ENCODE measurements at regions of chr10 and their contacts with region 1.

Region 1: GRCh38 chr10:124347956-124348355 is 70.8 kb downstream of the OAT start:
- DNase-seq: no peak
- H3K4me3 ChIP-seq: no peak overlapping the region
- H3K27ac ChIP-seq: no peak overlapping the region
- H3K4me1 ChIP-seq: no peaks in the 10 kb centered on the region; a peak in 1 of 7 replicates
- H3K27me3 ChIP-seq: no peaks in the 10 kb centered on the region
- CTCF ChIP-seq: peak; percentile 32 to 37 (median 37)
- EP300 ChIP-seq: no peak
- POLR2A ChIP-seq: no peak
- RAD21 ChIP-seq: peak; percentile 18 to 49; a peak in 3 of 4 replicates

Region 2: GRCh38 chr10:124332426-124332825 is 15.5 kb before region 1 on chr10:
- CTCF ChIA-PET with region 1: interaction called, 23 read pairs
- POLR2A ChIA-PET with region 1: no interaction called
- DNase-seq: no peak
- H3K4me3 ChIP-seq: no peak overlapping the region
- H3K27ac ChIP-seq: no peak overlapping the region
- H3K4me1 ChIP-seq: no peaks in the 10 kb centered on the region
- H3K27me3 ChIP-seq: no peaks in the 10 kb centered on the region; a peak in 1 of 7 replicates
- CTCF ChIP-seq: no peak
- EP300 ChIP-seq: no peak
- POLR2A ChIP-seq: no peak
- RAD21 ChIP-seq: no peak

Region 3: GRCh38 chr10:124364633-124365032 is 16.7 kb after region 1 on chr10:
- CTCF ChIA-PET with region 1: interaction called, 11 read pairs
- POLR2A ChIA-PET with region 1: no interaction called
- DNase-seq: no peak
- H3K4me3 ChIP-seq: no peak overlapping the region
- H3K27ac ChIP-seq: no peak overlapping the region
- H3K4me1 ChIP-seq: peaks cover 0 to 7% (median 3%) of the 10 kb centered on the region in 4 experiments; a peak in 4 of 7 replicates
- H3K27me3 ChIP-seq: no peaks in the 10 kb centered on the region
- CTCF ChIP-seq: no peak
- EP300 ChIP-seq: no peak
- POLR2A ChIP-seq: no peak
- RAD21 ChIP-seq: no peak

Region 4: DNA sequence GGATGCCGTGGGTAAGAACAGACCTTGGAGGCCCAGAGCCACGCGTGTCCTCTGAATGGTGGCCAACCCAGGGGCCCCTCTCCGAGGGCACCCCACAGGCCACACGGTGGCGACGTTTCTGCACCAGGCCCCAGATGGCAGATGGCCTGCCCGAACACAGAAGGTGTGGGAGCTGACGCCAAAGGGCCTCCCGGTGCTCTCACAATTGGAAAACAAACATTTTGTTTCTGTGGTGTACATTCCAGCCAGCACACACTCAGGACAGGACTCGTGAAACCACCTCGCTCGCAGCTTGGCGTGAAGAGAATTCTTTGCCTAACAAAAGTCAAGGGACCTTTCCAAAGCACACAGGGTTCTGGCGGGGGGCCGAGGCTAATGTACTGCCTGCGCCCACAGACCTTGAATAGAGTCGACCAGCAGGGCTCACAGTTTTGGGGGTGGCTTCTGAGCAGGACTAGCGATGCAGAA is 284.1 kb after region 1 on chr10:
- CTCF ChIA-PET with region 1: no interaction called
- POLR2A ChIA-PET with region 1: no interaction called
- DNase-seq: no peak
- H3K4me3 ChIP-seq: no peak overlapping the region
- H3K27ac ChIP-seq: no peak overlapping the region
- H3K4me1 ChIP-seq: peaks cover 0 to 14% (median 2%) of the 10 kb centered on the region in 4 experiments; a peak in 6 of 7 replicates
- H3K27me3 ChIP-seq: no peaks in the 10 kb centered on the region; a peak in 1 of 7 replicates
- CTCF ChIP-seq: peak; percentile 61 to 68 (median 64)
- EP300 ChIP-seq: no peak
- POLR2A ChIP-seq: no peak
- RAD21 ChIP-seq: peak; percentile 72 to 81